IMR-90 (cell line): ENCODE measurements at regions of chr1 and their contacts with region 1.

Region 1: GRCh38 chr1:212665241-212666115 is 34.2 kb downstream of the BATF3 start:
- DNase-seq: peak; percentile 77
- ATAC-seq: peak; percentile 91
- H3K4me3 ChIP-seq: peak overlapping the region; percentile 66
- H3K27ac ChIP-seq: peak overlapping the region; percentile 72
- H3K4me1 ChIP-seq: peaks cover 7% of the 10 kb centered on the region
- H3K27me3 ChIP-seq: no peaks in the 10 kb centered on the region
- CTCF ChIP-seq: peak; percentile 93
- POLR2A ChIP-seq: peak; percentile 53
- RAD21 ChIP-seq: peak; percentile 95

Region 2: DNA sequence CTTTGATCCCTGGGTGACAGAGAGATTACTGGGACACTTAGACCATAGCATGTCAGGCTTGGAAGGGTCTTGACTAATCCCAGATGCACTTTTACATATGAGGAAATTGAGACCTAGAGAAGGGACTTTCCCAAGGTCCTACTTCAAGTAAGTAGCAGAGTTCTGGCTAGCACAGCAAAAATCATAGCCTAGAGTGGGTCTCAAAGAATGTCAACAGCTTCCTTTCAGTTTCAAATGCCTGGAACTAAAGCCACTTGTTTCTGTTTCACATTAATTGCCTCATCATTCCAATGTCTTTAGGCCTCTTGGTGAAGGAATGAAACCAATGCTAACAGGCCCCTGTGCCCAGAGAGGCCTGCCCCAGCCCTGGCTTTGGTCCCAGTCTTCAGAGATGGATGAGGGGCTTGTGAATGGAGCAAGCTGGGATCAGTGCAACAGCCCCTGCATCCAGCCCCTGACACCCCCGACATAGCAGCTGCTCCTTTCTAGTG is 30.3 kb before region 1 on chr1:
- CTCF ChIA-PET with region 1: interaction called, 4 read pairs
- POLR2A ChIA-PET with region 1: no interaction called
- dilution Hi-C with region 1: no loop called
- in situ Hi-C with region 1: no loop called
- intact Hi-C with region 1: loop called (anchors 2 kb)
- DNase-seq: peak; percentile 74
- ATAC-seq: peak; percentile 18
- H3K4me3 ChIP-seq: no peak overlapping the region
- H3K27ac ChIP-seq: peak overlapping the region; percentile 88; the same call in 1 of the 2 replicates
- H3K4me1 ChIP-seq: peaks cover 31% of the 10 kb centered on the region
- H3K27me3 ChIP-seq: no peaks in the 10 kb centered on the region
- CTCF ChIP-seq: no peak
- POLR2A ChIP-seq: no peak
- RAD21 ChIP-seq: no peak

Region 3: GRCh38 chr1:212749821-212750535 is 84.5 kb after region 1 on chr1:
- CTCF ChIA-PET with region 1: interaction called, 5 read pairs
- POLR2A ChIA-PET with region 1: no interaction called
- dilution Hi-C with region 1: no loop called
- in situ Hi-C with region 1: no loop called
- intact Hi-C with region 1: loop called (anchors 1 kb)
- DNase-seq: peak; percentile 79
- ATAC-seq: peak; percentile 85
- H3K4me3 ChIP-seq: no peak overlapping the region
- H3K27ac ChIP-seq: peak overlapping the region; percentile 78; the same call in 1 of the 2 replicates
- H3K4me1 ChIP-seq: peaks cover 8% of the 10 kb centered on the region
- H3K27me3 ChIP-seq: no peaks in the 10 kb centered on the region
- CTCF ChIP-seq: peak; percentile 73
- POLR2A ChIP-seq: no peak
- RAD21 ChIP-seq: peak; percentile 60

Region 4: GRCh38 chr1:212915245-212916091 is 250.0 kb after region 1 on chr1:
- CTCF ChIA-PET with region 1: no interaction called
- POLR2A ChIA-PET with region 1: no interaction called
- dilution Hi-C with region 1: no loop called
- in situ Hi-C with region 1: no loop called
- intact Hi-C with region 1: loop called (anchors 2 kb)
- DNase-seq: peak; percentile 87
- ATAC-seq: peak; percentile 56
- H3K4me3 ChIP-seq: no peak overlapping the region
- H3K27ac ChIP-seq: no peak overlapping the region; the same call in 1 of the 2 replicates
- H3K4me1 ChIP-seq: peaks cover 9% of the 10 kb centered on the region; the same call in 1 of the 2 replicates
- H3K27me3 ChIP-seq: peaks cover 7% of the 10 kb centered on the region; the same call in 1 of the 2 replicates
- CTCF ChIP-seq: peak; percentile 52
- POLR2A ChIP-seq: no peak
- RAD21 ChIP-seq: peak; percentile 46; the same call in 1 of the 2 replicates

Region 5: GRCh38 chr1:212990276-212990675 is 324.8 kb after region 1 on chr1:
- CTCF ChIA-PET with region 1: interaction called, 4 read pairs
- POLR2A ChIA-PET with region 1: no interaction called
- dilution Hi-C with region 1: no loop called
- in situ Hi-C with region 1: loop called (anchors 25 kb)
- intact Hi-C with region 1: loop called (anchors 1 kb)
- DNase-seq: no peak
- ATAC-seq: no peak
- H3K4me3 ChIP-seq: no peak overlapping the region
- H3K27ac ChIP-seq: no peak overlapping the region
- H3K4me1 ChIP-seq: peaks cover 6% of the 10 kb centered on the region
- H3K27me3 ChIP-seq: no peaks in the 10 kb centered on the region
- CTCF ChIP-seq: no peak
- POLR2A ChIP-seq: no peak
- RAD21 ChIP-seq: no peak